ENCODE measurements at regions of chr3 and their contacts with region 1.

Region 1: GRCh38 chr3:14619605-14620004 is 32.0 kb upstream of the CCDC174 start:
- DNase-seq: no peak
- ATAC-seq: no peak
- H3K4me3 ChIP-seq: no peak overlapping the region
- H3K4me3 Mint-ChIP-seq: no peak overlapping the region
- H3K27ac ChIP-seq: no peak overlapping the region
- H3K27ac Mint-ChIP-seq: no peak overlapping the region
- H3K4me1 ChIP-seq: no peaks in the 10 kb centered on the region
- H3K4me1 Mint-ChIP-seq: no peaks in the 10 kb centered on the region
- H3K27me3 ChIP-seq: peaks cover 5 to 17% of the 10 kb centered on the region in 2 experiments
- H3K27me3 Mint-ChIP-seq: peaks cover 20 to 25% of the 10 kb centered on the region in 2 donors

Region 2: DNA sequence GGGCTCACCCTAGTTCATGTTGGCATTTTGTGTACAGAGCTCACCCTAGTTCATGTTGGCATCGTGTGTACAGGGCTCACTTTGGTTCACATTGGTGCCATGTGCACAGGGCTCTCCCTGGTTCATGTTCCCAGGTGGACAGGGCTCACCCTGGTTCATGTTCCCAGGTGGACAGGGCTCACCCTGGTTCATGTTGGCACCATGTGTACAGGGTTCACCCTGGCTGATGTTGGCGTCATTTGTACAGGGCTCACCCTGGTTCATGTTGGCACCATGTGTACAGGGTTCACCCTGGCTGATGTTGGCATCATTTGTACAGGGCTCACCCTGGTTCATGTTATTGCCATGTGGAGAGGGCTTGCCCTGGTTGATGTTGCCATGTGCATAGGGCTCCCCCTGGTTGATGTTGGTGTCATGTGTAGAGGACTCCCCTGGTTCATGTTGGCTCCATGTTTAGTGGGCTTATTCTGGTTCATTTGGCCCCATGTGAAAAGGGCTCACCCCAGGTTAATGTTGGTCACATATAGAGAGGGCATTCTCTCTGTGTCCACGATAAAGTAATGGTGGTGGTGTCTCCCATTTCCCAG is 296.1 kb after region 1 on chr3:
- CTCF ChIA-PET with region 1: interaction called in 1 of 2 experiments, 13 read pairs
- POLR2A ChIA-PET with region 1: no interaction called
- DNase-seq: peak in 19 of 35 experiments; percentile 8 to 52 (median 21)
- ATAC-seq: peak; percentile 46 to 82 (median 74)
- H3K4me3 ChIP-seq: no peak overlapping the region
- H3K4me3 Mint-ChIP-seq: no peak overlapping the region
- H3K27ac ChIP-seq: no peak overlapping the region
- H3K27ac Mint-ChIP-seq: no peak overlapping the region
- H3K4me1 ChIP-seq: peaks cover 0 to under 1% of the 10 kb centered on the region in 2 experiments
- H3K4me1 Mint-ChIP-seq: no peaks in the 10 kb centered on the region
- H3K27me3 ChIP-seq: peaks cover 0 to 33% of the 10 kb centered on the region in 2 experiments
- H3K27me3 Mint-ChIP-seq: peaks cover 0 to 2% of the 10 kb centered on the region in 2 donors

Measured in T-cell (primary cell).